K562 (cell line): ENCODE measurements at regions of chr6 and their contacts with region 1.

Region 1: GRCh38 chr6:28907394-28907793 is 16.4 kb downstream of the TRIM27 start:
- DNase-seq: no peak
- ATAC-seq: no peak
- H3K4me3 ChIP-seq: no peak overlapping the region
- H3K27ac ChIP-seq: no peak overlapping the region
- H3K4me1 ChIP-seq: no peaks in the 10 kb centered on the region; a peak in 2 of 5 replicates
- H3K27me3 ChIP-seq: no peaks in the 10 kb centered on the region
- CTCF ChIP-seq: no peak
- EP300 ChIP-seq: no peak
- POLR2A ChIP-seq: no peak
- RAD21 ChIP-seq: no peak

Region 2: GRCh38 chr6:28923318-28924102 is 16.1 kb after region 1 on chr6 and contains the start of gene TRIM27:
- CTCF ChIA-PET with region 1: interaction called, 3 read pairs
- POLR2A ChIA-PET with region 1: interaction called, 104 read pairs
- in situ Hi-C with region 1: no loop called
- intact Hi-C with region 1: no loop called
- DNase-seq: peak; percentile 91 to 97 (median 92)
- ATAC-seq: peak; percentile 91
- H3K4me3 ChIP-seq: peak within 1 kb of the TSS; percentile 95
- H3K27ac ChIP-seq: peak within 1 kb of the TSS; percentile 97
- H3K4me1 ChIP-seq: peaks cover 26 to 32% of the 10 kb centered on the region in 2 experiments
- H3K27me3 ChIP-seq: no peaks in the 10 kb centered on the region
- CTCF ChIP-seq: no peak
- EP300 ChIP-seq: no peak
- POLR2A ChIP-seq: peak; percentile 98
- RAD21 ChIP-seq: no peak
- polyA plus RNA-seq, gene TRIM27: 37.7 to 49.6 TPM

Region 3: GRCh38 chr6:29016559-29017427 is 109.4 kb after region 1 on chr6:
- CTCF ChIA-PET with region 1: no interaction called
- POLR2A ChIA-PET with region 1: no interaction called
- in situ Hi-C with region 1: no loop called
- intact Hi-C with region 1: no loop called
- DNase-seq: peak; percentile 73 to 96 (median 78)
- ATAC-seq: peak; percentile 96
- H3K4me3 ChIP-seq: peak overlapping the region; percentile 56
- H3K27ac ChIP-seq: peak overlapping the region; percentile 69
- H3K4me1 ChIP-seq: peaks cover 3 to 7% of the 10 kb centered on the region in 2 experiments; a peak in 3 of 5 replicates
- H3K27me3 ChIP-seq: no peaks in the 10 kb centered on the region
- CTCF ChIP-seq: peak; percentile 90 to 93 (median 93)
- EP300 ChIP-seq: no peak
- POLR2A ChIP-seq: no peak
- RAD21 ChIP-seq: peak; percentile 88 to 93